ENCODE measurements at regions of chr16 and their contacts with region 1.

Region 1: DNA sequence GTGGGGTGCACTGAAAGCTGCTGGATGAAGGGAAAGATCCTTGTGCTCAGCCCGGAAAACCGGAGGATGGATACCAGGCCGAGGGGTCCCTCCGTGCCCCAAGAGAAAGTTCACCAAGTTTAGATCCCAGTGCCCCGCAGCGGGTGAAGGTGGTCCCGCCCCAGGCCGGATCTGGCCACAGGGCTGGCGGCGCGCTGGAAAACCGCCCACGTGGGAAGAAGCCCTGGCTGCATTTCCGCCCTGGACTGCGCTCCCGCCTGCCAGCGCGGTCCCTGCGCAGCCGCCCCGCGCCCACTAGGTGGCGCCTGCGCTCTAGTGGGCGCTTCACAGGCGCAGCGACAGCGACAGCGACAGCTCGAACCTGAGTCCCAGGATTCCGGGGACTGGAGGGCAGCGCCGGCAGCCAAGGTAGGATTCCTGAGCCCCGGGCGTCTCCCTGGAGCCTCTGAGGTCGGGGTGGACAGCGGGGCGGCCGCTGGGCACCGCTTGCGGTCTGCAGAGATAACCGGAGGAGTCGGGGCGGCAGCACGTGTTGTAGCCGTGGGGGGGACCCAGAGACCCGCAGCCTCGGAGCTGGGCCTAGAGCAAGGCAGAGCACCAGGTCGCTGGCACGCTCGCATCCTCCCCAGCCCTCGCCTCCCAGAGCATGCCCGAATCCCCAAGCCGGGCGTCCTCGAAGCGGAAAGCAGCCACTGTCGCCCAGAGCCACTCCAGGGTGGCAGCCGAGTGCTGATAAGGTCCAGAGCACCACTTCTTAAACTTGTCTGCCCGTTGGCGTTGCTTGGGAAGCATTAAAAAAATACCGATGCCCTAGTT is at the start of gene CHD9:
- DNase-seq: peak; percentile 52 to 79
- ATAC-seq: peak; percentile 88 to 89
- H3K4me3 ChIP-seq: peak within 1 kb of the TSS; percentile 80 to 91 (median 87)
- H3K27ac ChIP-seq: peak within 1 kb of the TSS; percentile 89 to 94 (median 92)
- H3K4me1 ChIP-seq: peaks cover 23 to 39% of the 10 kb centered on the region in 2 donors
- H3K27me3 ChIP-seq: no peaks in the 10 kb centered on the region
- CTCF ChIP-seq: peak; percentile 99 to 100 (median 99)
- POLR2A ChIP-seq: no peak
- total RNA-seq, gene CHD9: 24.5 to 84.0 (median 48.2) TPM

Region 2: GRCh38 chr16:52799149-52799548 is 255.7 kb before region 1 on chr16:
- in situ Hi-C with region 1: no loop called
- intact Hi-C with region 1: no loop called
- DNase-seq: no peak
- ATAC-seq: no peak
- H3K4me3 ChIP-seq: no peak overlapping the region
- H3K27ac ChIP-seq: no peak overlapping the region
- H3K4me1 ChIP-seq: no peaks in the 10 kb centered on the region
- H3K27me3 ChIP-seq: no peaks in the 10 kb centered on the region
- CTCF ChIP-seq: no peak
- POLR2A ChIP-seq: no peak

Region 3: GRCh38 chr16:52932321-52932720 is 122.6 kb before region 1 on chr16:
- in situ Hi-C with region 1: no loop called
- intact Hi-C with region 1: no loop called
- DNase-seq: no peak
- ATAC-seq: no peak
- H3K4me3 ChIP-seq: no peak overlapping the region
- H3K27ac ChIP-seq: no peak overlapping the region
- H3K4me1 ChIP-seq: no peaks in the 10 kb centered on the region
- H3K27me3 ChIP-seq: no peaks in the 10 kb centered on the region
- CTCF ChIP-seq: no peak
- POLR2A ChIP-seq: no peak

Region 4: GRCh38 chr16:53091466-53092211 is 36.8 kb after region 1 on chr16:
- in situ Hi-C with region 1: no loop called
- intact Hi-C with region 1: loop called (anchors 1 kb)
- DNase-seq: peak; percentile 51 to 61
- ATAC-seq: peak in 1 of 2 donors; percentile 4
- H3K4me3 ChIP-seq: peak overlapping the region in 2 of 4 donors; percentile 9 to 41
- H3K27ac ChIP-seq: peak overlapping the region; percentile 90 to 95 (median 92)
- H3K4me1 ChIP-seq: peaks cover 65 to 68% of the 10 kb centered on the region in 2 donors
- H3K27me3 ChIP-seq: no peaks in the 10 kb centered on the region
- CTCF ChIP-seq: no peak
- POLR2A ChIP-seq: no peak

Region 5: GRCh38 chr16:53130159-53131049 is 75.5 kb after region 1 on chr16:
- in situ Hi-C with region 1: no loop called
- intact Hi-C with region 1: loop called (anchors 1 kb)
- DNase-seq: peak; percentile 98
- ATAC-seq: peak; percentile 80 to 82
- H3K4me3 ChIP-seq: peak overlapping the region; percentile 69 to 81 (median 76)
- H3K27ac ChIP-seq: peak overlapping the region; percentile 92 to 97 (median 94)
- H3K4me1 ChIP-seq: peaks cover 26 to 29% of the 10 kb centered on the region in 2 donors
- H3K27me3 ChIP-seq: no peaks in the 10 kb centered on the region
- CTCF ChIP-seq: peak in 4 of 5 experiments; percentile 88 to 94 (median 92)
- POLR2A ChIP-seq: peak; percentile 83 to 90

Region 6: GRCh38 chr16:53207810-53208752 is 153.2 kb after region 1 on chr16:
- in situ Hi-C with region 1: loop called in 2 of 4 experiments (anchors 5 to 10 kb)
- intact Hi-C with region 1: loop called (anchors 1 kb)
- DNase-seq: peak; percentile 28 to 45
- ATAC-seq: peak; percentile 86 to 95
- H3K4me3 ChIP-seq: peak overlapping the region; percentile 32 to 56 (median 43)
- H3K27ac ChIP-seq: peak overlapping the region; percentile 70 to 90 (median 76)
- H3K4me1 ChIP-seq: peaks cover 68 to 72% of the 10 kb centered on the region in 2 donors
- H3K27me3 ChIP-seq: no peaks in the 10 kb centered on the region
- CTCF ChIP-seq: peak; percentile 22 to 58 (median 51)
- POLR2A ChIP-seq: no peak

Region 7: DNA sequence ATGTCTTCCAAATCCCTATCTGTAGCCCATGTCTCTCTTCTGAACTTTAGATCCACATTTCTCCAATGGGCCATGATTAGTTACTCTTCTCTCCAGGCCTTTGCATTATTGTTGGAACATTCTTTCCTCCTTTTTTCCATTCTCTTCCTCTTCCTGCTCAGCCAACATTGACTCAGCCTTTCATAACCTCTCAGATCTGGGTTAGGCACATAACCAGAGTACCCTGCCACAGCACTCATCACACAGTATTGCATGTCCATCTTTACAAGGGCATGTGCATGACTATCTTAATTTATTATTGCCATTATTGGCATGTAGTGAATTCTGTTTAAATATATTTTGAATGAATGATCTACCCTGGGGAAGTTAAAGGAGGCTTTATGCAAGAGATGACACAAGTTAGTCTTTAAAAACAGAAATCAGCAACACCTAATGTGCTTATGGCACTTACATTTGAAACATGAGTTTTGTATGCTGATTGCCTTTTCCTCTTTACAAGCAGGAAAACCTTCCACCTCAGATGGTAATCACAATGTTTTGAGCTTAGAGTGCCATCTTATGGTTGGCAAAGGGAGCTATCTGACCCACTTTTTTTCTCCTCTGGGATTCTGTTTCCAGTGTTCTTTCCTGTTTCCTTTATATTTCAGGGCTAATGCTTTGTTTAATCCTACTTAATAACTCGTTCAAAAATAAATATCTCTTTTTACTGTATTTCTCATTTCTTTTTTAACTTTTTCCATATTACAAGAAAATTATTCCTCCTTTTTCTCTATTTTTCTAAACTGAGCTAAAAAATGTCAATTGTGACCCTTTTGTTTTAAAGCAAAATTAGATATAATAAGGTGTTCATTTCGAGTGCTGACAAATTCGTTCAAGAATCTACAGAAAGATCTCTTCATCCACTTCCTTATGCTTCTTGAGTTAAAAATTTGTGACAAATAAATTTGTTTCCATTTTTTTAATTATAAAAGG is 228.4 kb after region 1 on chr16:
- in situ Hi-C with region 1: no loop called
- intact Hi-C with region 1: loop called (anchors 5 kb)
- DNase-seq: no peak
- ATAC-seq: peak in 1 of 2 donors; percentile 71
- H3K4me3 ChIP-seq: no peak overlapping the region
- H3K27ac ChIP-seq: peak overlapping the region in 1 of 4 donors; percentile 10
- H3K4me1 ChIP-seq: peaks cover 0 to 4% of the 10 kb centered on the region in 2 donors
- H3K27me3 ChIP-seq: no peaks in the 10 kb centered on the region
- CTCF ChIP-seq: peak in 3 of 5 experiments; percentile 25 to 43 (median 41)
- POLR2A ChIP-seq: no peak

Region 8: GRCh38 chr16:53503270-53503923 is 448.5 kb after region 1 on chr16:
- in situ Hi-C with region 1: no loop called
- intact Hi-C with region 1: loop called (anchors 10 kb)
- DNase-seq: peak; percentile 100
- ATAC-seq: peak; percentile 90 to 91
- H3K4me3 ChIP-seq: peak overlapping the region; percentile 77 to 91 (median 82)
- H3K27ac ChIP-seq: peak overlapping the region; percentile 95 to 98 (median 96)
- H3K4me1 ChIP-seq: peaks cover 32 to 34% of the 10 kb centered on the region in 2 donors
- H3K27me3 ChIP-seq: no peaks in the 10 kb centered on the region
- CTCF ChIP-seq: peak in 1 of 5 experiments; percentile 5
- POLR2A ChIP-seq: peak; percentile 80 to 89

Measured in gastrocnemius medialis (tissue), 4 donors.